Mammary epithelial cell (primary cell): ENCODE measurements at regions of chr1 and their contacts with region 1.

Region 1: DNA sequence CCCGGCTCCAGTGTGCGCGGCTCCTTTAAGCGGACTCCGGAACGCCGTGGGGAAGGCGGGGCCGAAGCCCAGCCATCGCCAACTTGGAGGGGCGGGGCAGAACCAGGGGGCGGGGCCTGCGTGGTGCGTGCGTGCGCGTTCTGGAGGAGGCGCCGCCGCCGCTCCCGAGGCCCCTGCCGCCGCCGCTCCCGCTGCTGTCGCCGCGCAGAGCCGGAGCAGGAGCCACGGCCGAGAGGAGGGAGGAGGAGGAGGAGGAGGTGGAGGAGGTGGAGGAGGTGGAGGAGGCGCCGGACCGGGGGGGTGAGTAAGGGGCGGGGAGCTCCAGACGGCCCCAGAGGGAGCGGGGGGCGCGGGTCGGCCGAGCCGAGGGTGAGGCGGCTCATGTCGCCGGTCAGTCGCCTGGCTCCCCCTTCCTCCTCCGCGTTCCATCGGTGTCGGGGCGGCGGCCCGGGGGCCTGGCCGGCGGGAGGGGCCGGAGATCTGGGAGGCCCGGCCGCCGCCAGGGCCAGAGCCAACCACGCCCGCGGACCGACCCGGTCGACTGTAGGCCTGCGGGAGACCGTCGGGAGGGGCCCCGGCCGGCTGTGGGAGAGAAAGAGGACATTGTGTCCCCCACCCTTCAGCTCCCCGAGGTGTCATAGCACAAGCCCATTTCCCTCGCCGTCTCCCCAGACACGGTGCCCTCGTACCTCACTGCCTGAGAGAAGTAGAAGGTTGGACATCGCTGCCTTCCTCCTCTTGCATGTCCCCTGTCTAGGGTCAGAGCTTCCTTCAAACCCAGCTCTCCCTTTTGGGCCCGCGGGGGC is at the start of gene RAP1A:
- DNase-seq: peak; percentile 86
- H3K4me3 ChIP-seq: peak within 1 kb of the TSS; percentile 51 to 89 (median 83)
- H3K27ac ChIP-seq: peak within 1 kb of the TSS; percentile 42
- H3K4me1 ChIP-seq: peaks cover 6% of the 10 kb centered on the region
- H3K27me3 ChIP-seq: no peaks in the 10 kb centered on the region
- CTCF ChIP-seq: no peak
- total RNA-seq, gene RAP1A: 20.8 to 58.8 TPM

Region 2: GRCh38 chr1:111656086-111657017 is 36.5 kb after region 1 on chr1:
- CTCF ChIA-PET with region 1: no interaction called
- dilution Hi-C with region 1: no loop called
- in situ Hi-C with region 1: no loop called
- intact Hi-C with region 1: loop called (anchors 2 kb)
- DNase-seq: peak; percentile 27
- H3K4me3 ChIP-seq: no peak overlapping the region
- H3K27ac ChIP-seq: no peak overlapping the region
- H3K4me1 ChIP-seq: no peaks in the 10 kb centered on the region
- H3K27me3 ChIP-seq: no peaks in the 10 kb centered on the region
- CTCF ChIP-seq: peak; percentile 52 to 65

Region 3: GRCh38 chr1:112040891-112041740 is 421.3 kb after region 1 on chr1:
- CTCF ChIA-PET with region 1: no interaction called
- dilution Hi-C with region 1: no loop called
- in situ Hi-C with region 1: no loop called
- intact Hi-C with region 1: no loop called
- DNase-seq: no peak
- H3K4me3 ChIP-seq: no peak overlapping the region
- H3K27ac ChIP-seq: no peak overlapping the region
- H3K4me1 ChIP-seq: no peaks in the 10 kb centered on the region
- H3K27me3 ChIP-seq: peaks cover 2% of the 10 kb centered on the region
- CTCF ChIP-seq: no peak